ENCODE measurements at regions of chr13 and their contacts with region 1.

Region 1: GRCh38 chr13:23020223-23020843 is 160.4 kb upstream of the SGCG start:
- DNase-seq: no peak

Region 2: DNA sequence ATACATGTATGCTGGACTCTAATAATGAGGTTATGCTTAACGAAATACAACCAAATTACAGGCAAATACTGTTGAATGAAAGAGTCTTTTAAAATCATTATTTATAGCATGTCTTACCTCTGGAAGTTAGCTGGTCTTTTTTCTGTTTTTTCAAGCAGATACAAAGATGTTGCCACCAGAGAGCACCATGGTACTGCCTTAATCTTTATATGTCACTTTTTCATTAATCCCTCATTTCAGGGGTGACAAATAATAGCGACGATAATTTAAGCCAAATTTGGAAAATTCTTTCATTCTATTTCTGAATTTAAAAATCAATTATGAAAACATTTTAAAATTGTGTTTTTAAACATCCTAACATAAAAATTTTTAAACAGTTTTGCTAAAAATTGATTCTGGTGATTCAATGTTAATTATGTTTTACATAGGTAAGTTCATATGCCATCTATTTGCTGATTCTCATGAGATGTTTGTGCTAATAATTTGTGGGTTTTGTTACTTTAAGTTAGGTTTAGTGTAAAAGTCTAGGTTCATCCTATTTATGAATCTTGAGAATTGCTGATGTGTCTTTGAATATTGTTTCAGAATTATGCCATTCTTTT is 218.8 kb before region 1 on chr13:
- intact Hi-C with region 1: loop called (anchors 10 kb)
- DNase-seq: no peak